Heart right ventricle (tissue), 16 donors: ENCODE measurements at regions of chr3 and their contacts with region 1.

Region 1: GRCh38 chr3:172580680-172581401 is 57.6 kb upstream of the TNFSF10 start:
- DNase-seq: no peak
- ATAC-seq: peak in 6 of 8 donors; percentile 23 to 71 (median 53)
- H3K4me3 ChIP-seq: no peak overlapping the region
- H3K27ac ChIP-seq: peak overlapping the region in 9 of 10 donors; percentile 47 to 94 (median 81)
- H3K4me1 ChIP-seq: peaks cover 3 to 56% (median 24%) of the 10 kb centered on the region in 9 donors
- H3K27me3 ChIP-seq: no peaks in the 10 kb centered on the region
- CTCF ChIP-seq: no peak

Region 2: DNA sequence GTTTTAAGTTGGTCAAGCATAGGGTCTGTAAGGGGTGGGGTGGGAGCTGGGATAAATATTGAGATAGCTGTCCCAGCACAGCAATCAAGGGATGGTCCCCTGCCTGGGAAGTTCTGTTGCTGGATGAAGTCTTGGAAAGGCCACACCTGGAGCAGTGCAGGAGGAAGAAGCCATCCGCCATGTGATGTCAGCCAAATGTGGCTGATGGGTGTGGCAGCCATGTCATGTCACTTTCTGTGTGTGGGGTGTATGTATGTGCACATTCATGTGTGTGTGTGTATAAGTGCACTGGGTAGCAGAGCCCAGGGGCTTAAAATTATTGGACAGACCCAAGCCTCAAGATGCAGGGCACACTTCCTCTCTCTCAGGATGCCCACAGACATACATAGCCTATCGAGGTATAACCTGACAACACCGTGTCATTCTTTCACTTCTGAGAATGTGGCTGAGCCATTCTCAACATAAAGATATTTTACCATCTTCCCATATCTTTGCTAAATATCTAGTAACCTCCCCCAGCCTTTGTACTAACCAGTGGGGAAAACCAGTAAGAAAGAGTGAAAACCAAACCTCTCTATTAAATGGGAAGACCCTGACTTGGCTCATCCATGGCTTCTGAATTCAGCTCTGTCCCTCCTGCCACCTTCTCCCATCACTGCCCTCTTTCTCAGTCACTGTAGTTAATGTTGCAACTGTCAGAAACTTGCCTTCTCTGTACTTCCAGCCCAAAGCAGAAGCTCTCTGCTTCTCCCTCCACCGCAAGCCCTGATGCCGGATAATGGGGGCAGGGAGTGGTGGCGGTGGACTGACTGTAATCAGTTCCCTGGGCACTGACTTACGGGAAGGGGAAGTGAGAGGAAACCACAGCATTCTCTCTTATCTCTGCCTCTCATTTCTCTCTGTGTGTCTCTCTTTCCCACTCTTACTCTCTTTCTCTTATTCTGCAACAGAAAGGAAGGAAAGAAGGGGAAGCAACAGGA is 68.8 kb before region 1 on chr3:
- intact Hi-C with region 1: loop called in 2 of 10 experiments (anchors 10 kb)
- DNase-seq: peak; percentile 56 to 62
- ATAC-seq: peak in 7 of 8 donors; percentile 52 to 72 (median 62)
- H3K4me3 ChIP-seq: peak overlapping the region in 1 of 10 donors; percentile 6
- H3K27ac ChIP-seq: peak overlapping the region in 8 of 10 donors; percentile 39 to 90 (median 68)
- H3K4me1 ChIP-seq: peaks cover 8 to 70% (median 40%) of the 10 kb centered on the region in 9 donors
- H3K27me3 ChIP-seq: no peaks in the 10 kb centered on the region
- CTCF ChIP-seq: no peak

Region 3: DNA sequence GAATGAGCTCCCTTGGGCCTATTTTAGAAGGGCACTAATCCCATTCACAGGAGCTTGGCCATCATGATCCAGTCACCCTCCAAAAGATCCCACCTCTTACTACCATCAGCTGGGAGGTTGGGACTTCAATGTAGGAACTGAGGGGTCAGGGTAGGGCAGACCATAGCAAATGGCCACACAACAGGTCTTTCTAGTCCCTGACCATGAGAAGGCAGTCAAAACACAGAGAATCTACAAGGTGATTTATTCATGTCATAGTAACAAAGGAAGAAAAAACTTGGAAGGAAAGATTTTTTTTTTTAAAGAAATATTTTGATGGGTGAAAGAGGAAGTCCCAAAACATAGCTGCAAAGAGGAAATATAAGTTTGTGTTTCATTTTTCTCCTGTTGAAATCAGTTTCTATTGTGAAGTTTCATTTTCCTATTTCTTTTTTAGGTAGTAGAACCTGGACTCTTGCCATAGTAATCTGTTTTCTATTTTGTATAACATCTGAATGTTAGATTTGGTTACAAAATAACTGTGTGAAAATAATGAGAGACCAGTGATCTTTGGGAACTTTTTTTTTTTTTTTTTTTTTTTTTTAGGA is 34.1 kb before region 1 on chr3:
- intact Hi-C with region 1: loop called in 1 of 10 experiments (anchors 5 kb)
- DNase-seq: no peak
- ATAC-seq: peak in 4 of 8 donors; percentile 28 to 63 (median 45)
- H3K4me3 ChIP-seq: no peak overlapping the region
- H3K27ac ChIP-seq: peak overlapping the region in 6 of 10 donors; percentile 24 to 75 (median 60)
- H3K4me1 ChIP-seq: peaks cover 0 to 41% (median 24%) of the 10 kb centered on the region in 9 donors
- H3K27me3 ChIP-seq: no peaks in the 10 kb centered on the region
- CTCF ChIP-seq: peak in 2 of 9 donors; percentile 8 to 43